Common myeloid progenitor, CD34-positive (primary cell): ENCODE measurements at regions of chr10 and their contacts with region 1.

Region 1: DNA sequence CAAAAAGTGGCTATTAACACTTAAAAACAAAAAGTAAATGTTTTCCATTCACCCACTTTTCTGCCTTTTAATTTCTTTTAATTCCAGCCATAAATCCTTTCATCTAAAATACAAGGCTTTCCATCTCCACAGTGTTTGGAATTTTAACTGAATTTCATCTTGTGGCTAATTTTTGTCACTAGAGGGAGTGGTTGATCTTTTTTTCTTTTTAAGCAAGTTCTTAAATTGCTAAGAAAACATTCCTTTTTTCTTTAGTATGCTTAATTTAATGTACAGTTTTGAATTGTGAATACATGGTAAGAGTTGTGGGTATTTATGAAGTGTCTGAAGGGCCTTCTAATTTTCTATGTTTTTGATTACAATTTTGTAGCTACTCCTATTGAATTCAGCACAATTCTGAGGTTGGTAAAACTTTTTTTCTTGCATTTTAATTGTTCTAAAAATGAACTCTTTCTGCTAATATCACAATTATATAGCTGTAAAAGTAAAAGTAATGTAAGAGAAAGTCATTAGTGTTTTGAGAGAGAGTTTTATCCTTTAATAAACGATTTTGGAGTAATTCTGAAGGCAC is 54.9 kb upstream of the ANK3 start:
- DNase-seq: peak; percentile 31 to 53 (median 43)
- H3K4me3 ChIP-seq: no peak overlapping the region
- H3K27ac ChIP-seq: no peak overlapping the region
- H3K4me1 ChIP-seq: peaks cover 0 to 9% (median 5%) of the 10 kb centered on the region in 4 experiments
- H3K27me3 ChIP-seq: no peaks in the 10 kb centered on the region

Region 2: GRCh38 chr10:60335708-60336107 is 108.9 kb before region 1 on chr10:
- CTCF ChIA-PET with region 1: no interaction called
- POLR2A ChIA-PET with region 1: no interaction called
- DNase-seq: no peak
- H3K4me3 ChIP-seq: no peak overlapping the region
- H3K27ac ChIP-seq: no peak overlapping the region
- H3K4me1 ChIP-seq: no peaks in the 10 kb centered on the region
- H3K27me3 ChIP-seq: no peaks in the 10 kb centered on the region

Region 3: GRCh38 chr10:60463746-60464145 is 19.2 kb after region 1 on chr10:
- CTCF ChIA-PET with region 1: interaction called, 10 read pairs
- POLR2A ChIA-PET with region 1: no interaction called
- DNase-seq: no peak
- H3K4me3 ChIP-seq: no peak overlapping the region
- H3K27ac ChIP-seq: no peak overlapping the region
- H3K4me1 ChIP-seq: peaks cover 0 to 7% (median 2%) of the 10 kb centered on the region in 4 experiments
- H3K27me3 ChIP-seq: no peaks in the 10 kb centered on the region